ENCODE measurements at regions of chr12 and their contacts with region 1.

Region 1: GRCh38 chr12:79344855-79345847 is 345.6 kb downstream of the PAWR start:
- DNase-seq: peak; percentile 73
- H3K4me3 Mint-ChIP-seq: no peak overlapping the region
- H3K27ac Mint-ChIP-seq: no peak overlapping the region
- H3K4me1 Mint-ChIP-seq: no peaks in the 10 kb centered on the region
- H3K27me3 Mint-ChIP-seq: peaks cover 7% of the 10 kb centered on the region
- CTCF ChIP-seq: peak; percentile 70

Region 2: DNA sequence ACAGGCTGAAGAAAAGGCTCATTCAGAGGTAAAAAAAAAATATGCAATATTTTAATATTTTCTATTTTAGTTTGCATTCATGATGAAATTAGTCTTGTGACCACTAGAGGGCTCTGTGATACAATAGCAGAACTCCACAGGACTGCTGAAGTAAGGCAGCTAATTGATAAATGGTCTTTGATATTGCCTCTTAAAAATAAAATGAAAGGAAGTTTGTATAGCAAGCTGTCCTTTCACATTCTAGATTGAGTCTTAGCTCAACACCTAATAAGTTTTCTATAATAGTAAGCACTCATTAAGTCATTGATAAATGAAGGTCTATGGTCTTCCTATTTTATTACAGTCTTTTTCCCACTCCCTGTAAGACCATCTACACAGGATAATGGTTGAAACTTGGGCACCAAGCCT is 1198.8 kb before region 1 on chr12:
- CTCF ChIA-PET with region 1: interaction called, 5 read pairs
- POLR2A ChIA-PET with region 1: no interaction called
- intact Hi-C with region 1: loop called (anchors 10 kb)
- DNase-seq: peak; percentile 47
- H3K4me3 Mint-ChIP-seq: no peak overlapping the region
- H3K27ac Mint-ChIP-seq: no peak overlapping the region
- H3K4me1 Mint-ChIP-seq: no peaks in the 10 kb centered on the region
- H3K27me3 Mint-ChIP-seq: no peaks in the 10 kb centered on the region
- CTCF ChIP-seq: peak; percentile 62

Region 3: DNA sequence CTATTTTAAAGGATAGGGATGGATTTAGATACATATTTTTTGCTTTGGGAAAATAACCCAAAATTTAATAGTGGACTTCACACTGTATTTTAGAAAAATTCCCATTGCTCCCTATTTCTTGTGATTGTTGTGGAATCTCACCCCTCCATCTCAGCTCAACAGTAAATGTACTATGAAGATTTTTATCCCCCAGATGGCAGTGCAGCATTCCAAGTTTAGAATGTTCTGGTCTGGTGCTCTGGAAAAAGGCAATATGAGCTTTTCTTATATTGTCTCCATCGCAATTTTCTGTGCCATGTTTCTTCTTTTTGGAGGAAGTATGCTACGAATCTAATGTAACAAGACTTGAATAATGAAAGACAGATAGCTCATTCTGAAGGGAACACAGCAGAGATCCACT is 952.2 kb before region 1 on chr12:
- CTCF ChIA-PET with region 1: interaction called, 5 read pairs
- POLR2A ChIA-PET with region 1: no interaction called
- intact Hi-C with region 1: loop called (anchors 5 kb)
- DNase-seq: peak; percentile 38
- H3K4me3 Mint-ChIP-seq: no peak overlapping the region
- H3K27ac Mint-ChIP-seq: no peak overlapping the region
- H3K4me1 Mint-ChIP-seq: no peaks in the 10 kb centered on the region
- H3K27me3 Mint-ChIP-seq: no peaks in the 10 kb centered on the region
- CTCF ChIP-seq: peak; percentile 19

Region 4: DNA sequence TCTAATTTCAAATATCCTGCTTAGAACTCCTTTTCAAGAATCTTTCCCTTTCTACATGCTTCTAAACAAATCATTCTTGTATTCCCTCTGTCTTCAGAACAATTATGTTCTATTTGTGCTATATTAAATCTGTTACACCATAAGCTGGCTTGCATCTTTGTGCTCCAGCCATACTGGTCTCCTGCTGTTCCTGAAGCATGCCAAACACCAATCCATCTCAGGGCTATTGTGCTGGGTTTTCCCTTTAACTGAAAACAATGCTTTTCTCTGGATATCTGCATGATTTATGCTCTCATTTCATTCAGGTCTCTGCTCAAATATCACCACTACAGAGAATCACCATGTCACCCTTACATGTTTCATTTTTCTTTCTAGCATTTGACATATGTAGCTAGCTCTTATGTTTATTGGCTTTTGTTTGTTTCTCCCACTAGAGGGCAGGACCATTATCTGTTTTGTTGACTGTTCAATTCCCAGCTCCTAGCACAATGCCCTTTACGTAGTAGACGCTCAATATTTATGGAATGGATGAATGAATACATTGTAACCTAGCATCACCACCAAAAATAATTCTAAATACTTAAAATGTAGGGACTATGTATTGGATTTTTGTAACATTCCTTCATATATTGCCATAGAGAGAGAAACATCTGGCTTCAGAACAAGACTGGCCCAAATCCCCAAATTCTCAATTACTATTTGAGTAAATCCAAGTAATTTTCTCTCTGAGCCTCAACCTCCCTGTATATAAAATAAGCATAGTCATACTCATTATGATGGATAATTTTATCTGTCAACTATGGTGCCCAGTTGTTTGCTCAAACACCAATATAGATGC is 782.6 kb before region 1 on chr12:
- CTCF ChIA-PET with region 1: interaction called, 4 read pairs
- POLR2A ChIA-PET with region 1: no interaction called
- intact Hi-C with region 1: loop called (anchors 2 kb)
- DNase-seq: peak; percentile 47
- H3K4me3 Mint-ChIP-seq: no peak overlapping the region
- H3K27ac Mint-ChIP-seq: no peak overlapping the region
- H3K4me1 Mint-ChIP-seq: peaks cover 6% of the 10 kb centered on the region
- H3K27me3 Mint-ChIP-seq: no peaks in the 10 kb centered on the region
- CTCF ChIP-seq: peak; percentile 32

Region 5: DNA sequence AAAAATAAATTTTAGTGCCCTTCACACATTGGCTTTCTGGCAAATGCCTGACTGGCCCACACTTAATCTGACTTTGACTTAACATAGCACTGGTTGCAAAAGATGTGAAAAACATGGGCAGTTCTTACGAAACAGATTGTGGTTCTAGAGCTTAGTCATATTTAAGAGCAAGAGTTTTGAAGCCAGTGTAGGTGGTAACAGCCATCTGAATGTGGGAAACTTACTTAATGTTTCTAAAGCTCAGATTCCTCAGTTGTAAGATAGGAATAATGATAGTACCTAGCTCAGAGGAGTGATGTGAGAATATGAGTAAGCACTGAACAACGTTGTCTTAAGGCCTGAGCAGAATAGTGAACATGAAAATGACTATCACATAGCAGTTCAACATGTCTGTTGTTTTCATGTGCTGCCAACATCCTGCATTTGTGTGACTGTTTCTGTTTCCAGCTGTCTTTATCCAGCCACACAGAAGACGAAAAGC is 217.8 kb before region 1 on chr12:
- CTCF ChIA-PET with region 1: interaction called, 3 read pairs
- POLR2A ChIA-PET with region 1: no interaction called
- intact Hi-C with region 1: loop called (anchors 1 kb)
- DNase-seq: peak; percentile 91
- H3K4me3 Mint-ChIP-seq: no peak overlapping the region
- H3K27ac Mint-ChIP-seq: peak overlapping the region; percentile 86
- H3K4me1 Mint-ChIP-seq: peaks cover 25% of the 10 kb centered on the region
- H3K27me3 Mint-ChIP-seq: no peaks in the 10 kb centered on the region
- CTCF ChIP-seq: no peak

Region 6: GRCh38 chr12:79358716-79359300 is 13.7 kb after region 1 on chr12:
- CTCF ChIA-PET with region 1: interaction called, 10 read pairs
- POLR2A ChIA-PET with region 1: interaction called, 3 read pairs
- intact Hi-C with region 1: no loop called
- DNase-seq: no peak
- H3K4me3 Mint-ChIP-seq: no peak overlapping the region
- H3K27ac Mint-ChIP-seq: no peak overlapping the region
- H3K4me1 Mint-ChIP-seq: no peaks in the 10 kb centered on the region
- H3K27me3 Mint-ChIP-seq: no peaks in the 10 kb centered on the region
- CTCF ChIP-seq: no peak

Measured in MCF 10A (cell line).